Posterior vena cava (tissue), 2 donors: ENCODE measurements at regions of chr14 and their contacts with region 1.

Region 1: GRCh38 chr14:72104011-72104613 is 171.9 kb downstream of the RGS6 start:
- DNase-seq: no peak

Region 2: GRCh38 chr14:70622111-70622712 is 1481.9 kb before region 1 on chr14:
- intact Hi-C with region 1: loop called in 1 of 2 experiments (anchors 5 kb)
- DNase-seq: no peak

Region 3: GRCh38 chr14:72182708-72183432 is 78.8 kb after region 1 on chr14:
- intact Hi-C with region 1: loop called in 1 of 2 experiments (anchors 2 kb)
- DNase-seq: no peak